ENCODE measurements at regions of chr1 and their contacts with region 1.

Region 1: GRCh38 chr1:31705080-31705866 is 1.5 kb upstream of the COL16A1 start:
- DNase-seq: peak; percentile 36
- H3K4me3 ChIP-seq: no peak overlapping the region
- H3K27ac ChIP-seq: no peak overlapping the region
- H3K4me1 ChIP-seq: no peaks in the 10 kb centered on the region
- CTCF ChIP-seq: peak; percentile 51; the same call in 1 of the 2 replicates

Region 2: DNA sequence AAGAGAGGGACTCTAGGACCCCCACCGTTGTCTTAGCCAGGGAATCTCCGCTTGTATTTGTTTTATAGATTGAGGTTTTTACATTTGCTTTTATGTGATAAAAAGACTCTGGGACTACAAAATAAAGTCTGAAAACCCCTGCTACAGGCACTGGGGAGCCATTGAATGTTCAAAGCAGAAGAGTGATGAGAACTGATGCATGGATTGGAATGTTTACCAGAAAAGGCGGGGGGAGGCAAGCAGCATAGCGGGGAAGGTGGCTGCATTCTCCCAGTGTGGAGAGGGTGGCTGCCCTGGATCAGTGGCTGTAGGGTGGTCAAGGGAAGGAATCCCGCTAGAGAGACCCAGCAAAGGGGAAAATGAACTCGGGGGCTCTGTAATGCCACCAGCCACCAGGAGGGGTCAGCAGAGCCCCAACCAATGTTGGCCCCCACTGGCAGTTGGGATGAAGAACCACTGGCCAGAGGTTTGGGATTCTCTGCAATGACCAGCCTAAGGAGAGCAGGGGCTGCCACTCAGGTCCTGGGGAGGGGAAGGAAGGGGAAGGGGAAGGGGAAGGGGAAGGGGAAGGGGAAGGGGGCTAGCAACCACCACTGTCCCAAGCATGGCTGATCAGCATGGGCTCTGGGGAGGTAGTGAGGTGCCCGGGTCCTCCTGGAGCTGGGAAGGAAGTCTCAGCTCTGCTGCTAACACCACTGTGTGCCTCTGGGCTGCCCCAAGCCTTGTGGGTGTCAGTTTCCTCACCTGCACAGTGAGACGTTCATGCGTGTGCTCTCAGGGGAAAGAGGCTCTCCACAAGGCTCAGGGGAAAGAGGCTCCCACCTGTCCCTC is 41.4 kb before region 1 on chr1:
- CTCF ChIA-PET with region 1: no interaction called
- POLR2A ChIA-PET with region 1: no interaction called
- intact Hi-C with region 1: loop called (anchors 5 kb)
- DNase-seq: peak; percentile 60
- H3K4me3 ChIP-seq: no peak overlapping the region
- H3K27ac ChIP-seq: no peak overlapping the region
- H3K4me1 ChIP-seq: no peaks in the 10 kb centered on the region
- CTCF ChIP-seq: peak; percentile 91

Region 3: DNA sequence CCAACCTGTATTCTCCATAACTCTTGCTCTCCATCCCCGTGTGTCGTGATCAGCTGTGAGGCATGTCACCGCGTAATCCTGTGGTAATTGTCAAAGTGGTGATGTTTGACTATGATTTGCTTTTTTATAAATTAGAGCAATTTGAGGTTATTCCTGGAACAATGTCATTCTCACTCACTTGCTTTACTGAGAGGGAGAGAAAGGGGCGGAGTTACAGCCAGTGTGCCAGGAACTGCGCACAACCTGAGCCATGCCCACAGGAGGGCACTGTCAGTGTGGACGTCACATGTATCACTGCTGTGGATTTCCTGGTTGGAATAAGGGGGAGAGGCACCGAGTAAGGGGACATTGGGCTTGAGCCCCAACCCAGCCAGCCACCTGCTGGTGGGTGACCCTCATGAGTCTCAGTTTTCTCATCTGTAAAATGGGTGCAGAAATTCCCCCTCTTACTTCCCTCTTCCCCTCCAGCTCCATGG is 52.0 kb after region 1 on chr1:
- CTCF ChIA-PET with region 1: no interaction called
- POLR2A ChIA-PET with region 1: no interaction called
- intact Hi-C with region 1: no loop called
- DNase-seq: no peak
- H3K4me3 ChIP-seq: no peak overlapping the region
- H3K27ac ChIP-seq: no peak overlapping the region
- H3K4me1 ChIP-seq: peaks cover 28% of the 10 kb centered on the region
- CTCF ChIP-seq: peak; percentile 32; the same call in 1 of the 2 replicates

Region 4: DNA sequence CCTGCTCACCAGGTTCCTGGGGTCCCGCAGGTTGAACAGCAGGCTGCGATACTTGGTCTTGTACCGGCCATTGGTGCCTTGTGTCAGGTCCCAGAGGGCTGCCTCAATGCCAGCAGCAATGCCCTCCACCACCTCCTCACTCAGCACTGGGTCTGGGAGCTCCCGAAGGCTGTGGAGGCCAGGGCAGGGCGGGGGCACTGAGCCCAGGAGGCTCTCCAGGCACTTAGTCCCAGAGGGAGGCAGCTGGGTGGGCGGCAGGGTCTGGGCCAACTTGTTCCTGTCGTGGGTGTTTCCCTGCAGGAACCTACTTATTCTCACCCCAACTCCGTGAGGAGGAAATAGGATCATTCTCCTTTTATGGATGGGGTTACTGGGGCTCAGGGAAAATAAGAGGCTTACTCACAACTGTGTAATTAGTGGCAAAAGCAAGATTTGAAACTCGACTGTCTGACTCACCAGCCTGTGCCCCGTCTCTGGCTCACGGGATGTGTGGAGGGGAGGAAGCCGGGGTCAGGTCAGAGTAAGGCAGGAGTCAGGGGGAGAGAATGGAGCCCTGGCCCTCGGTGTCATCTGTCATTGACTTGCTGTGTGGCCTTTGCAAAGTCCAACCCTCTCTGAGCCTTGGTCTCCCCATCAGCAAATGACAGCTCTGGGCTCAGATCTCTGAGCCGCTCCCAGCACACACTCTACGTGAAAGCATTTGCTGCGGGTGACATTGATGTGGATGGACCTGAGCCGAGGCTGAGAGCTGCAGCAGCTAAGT is 93.3 kb after region 1 on chr1:
- CTCF ChIA-PET with region 1: no interaction called
- POLR2A ChIA-PET with region 1: no interaction called
- intact Hi-C with region 1: no loop called
- DNase-seq: no peak
- H3K4me3 ChIP-seq: no peak overlapping the region
- H3K27ac ChIP-seq: no peak overlapping the region
- H3K4me1 ChIP-seq: peaks cover 17% of the 10 kb centered on the region
- CTCF ChIP-seq: no peak

Region 5: GRCh38 chr1:32247983-32248889 is 543.0 kb after region 1 on chr1:
- CTCF ChIA-PET with region 1: no interaction called
- POLR2A ChIA-PET with region 1: no interaction called
- intact Hi-C with region 1: no loop called
- DNase-seq: peak; percentile 89
- H3K4me3 ChIP-seq: peak overlapping the region; percentile 43
- H3K27ac ChIP-seq: peak overlapping the region; percentile 99
- H3K4me1 ChIP-seq: peaks cover 80% of the 10 kb centered on the region
- CTCF ChIP-seq: peak; percentile 93